Activated B cell treated with CpG ODN at 0.5 μM for 24 hours (primary cell): ENCODE measurements at regions of chr4 and their contacts with region 1.

Region 1: GRCh38 chr4:184949020-184949419 is 69.3 kb upstream of the HELT start:
- DNase-seq: no peak
- ATAC-seq: no peak
- H3K4me3 Mint-ChIP-seq: no peak overlapping the region
- H3K27ac Mint-ChIP-seq: no peak overlapping the region
- H3K4me1 Mint-ChIP-seq: no peaks in the 10 kb centered on the region
- H3K27me3 Mint-ChIP-seq: peaks cover 29% of the 10 kb centered on the region
- CTCF ChIP-seq: no peak

Region 2: DNA sequence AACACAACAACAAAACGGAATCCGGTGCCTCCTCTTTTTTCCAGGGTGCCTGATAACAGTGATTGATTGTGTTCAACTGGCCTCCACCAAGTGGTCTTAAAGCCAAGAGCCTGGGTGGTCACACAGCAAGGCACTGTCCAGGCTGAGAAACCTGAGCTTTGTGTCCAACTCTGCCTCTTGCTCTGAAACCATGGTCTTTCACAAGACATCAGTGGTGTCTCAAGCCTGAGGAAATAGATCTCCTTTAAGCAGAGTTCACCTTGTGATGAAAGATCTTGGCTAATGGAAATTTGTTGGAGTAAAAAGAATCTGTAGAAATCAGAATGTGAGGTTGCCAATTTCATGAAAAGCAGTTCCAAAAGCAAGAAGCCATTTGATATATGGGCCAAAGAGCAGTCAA is 76.0 kb before region 1 on chr4:
- CTCF ChIA-PET with region 1: no interaction called
- POLR2A ChIA-PET with region 1: no interaction called
- intact Hi-C with region 1: loop called (anchors 5 kb)
- DNase-seq: no peak
- ATAC-seq: no peak
- H3K4me3 Mint-ChIP-seq: no peak overlapping the region
- H3K27ac Mint-ChIP-seq: no peak overlapping the region
- H3K4me1 Mint-ChIP-seq: no peaks in the 10 kb centered on the region
- H3K27me3 Mint-ChIP-seq: no peaks in the 10 kb centered on the region
- CTCF ChIP-seq: no peak